Heart left ventricle (tissue), 16 donors: ENCODE measurements at regions of chr15 and their contacts with region 1.

Region 1: DNA sequence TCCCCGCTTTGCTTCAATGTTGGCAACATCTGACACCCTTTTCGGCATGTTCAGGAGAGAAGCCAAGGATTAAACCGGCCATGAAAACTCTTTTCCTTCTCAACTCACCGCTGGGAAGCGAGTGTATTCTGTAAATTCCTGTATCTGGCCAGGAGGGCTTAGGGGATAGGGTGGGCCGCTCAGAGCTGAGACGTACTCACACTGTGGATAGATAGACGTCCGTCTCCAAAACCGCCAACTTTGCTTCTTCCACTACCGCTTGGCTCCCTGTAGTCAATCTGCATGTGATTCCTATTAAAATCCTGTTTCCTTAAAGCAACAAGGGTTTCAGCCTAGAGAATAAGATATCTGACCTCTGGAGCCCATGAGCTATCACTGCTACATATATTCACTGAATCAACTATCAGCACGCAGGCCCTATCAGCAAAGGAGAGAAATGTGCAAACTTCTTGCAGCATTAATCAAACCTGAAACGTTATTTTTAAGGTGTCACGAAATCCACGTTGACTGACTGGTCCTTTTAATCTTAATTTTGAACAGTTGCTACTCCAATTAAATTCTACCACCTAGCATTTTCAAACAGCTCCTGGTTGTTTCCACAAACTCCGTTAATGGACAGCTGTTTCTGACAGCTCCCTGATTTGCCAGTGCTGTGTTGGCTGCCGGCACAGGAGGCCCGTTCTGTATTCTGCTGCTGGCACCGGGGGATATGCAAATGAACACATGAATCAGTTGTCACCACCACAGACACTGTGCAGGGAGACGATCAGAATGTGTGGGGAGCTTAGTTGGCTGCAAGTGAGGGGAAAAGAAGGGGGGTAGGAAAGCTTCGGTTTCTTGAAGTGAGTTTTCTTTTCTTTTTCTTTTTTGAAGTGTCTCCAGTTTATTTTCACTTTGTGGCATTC is 438.9 kb upstream of the ARRDC4 start:
- DNase-seq: peak; percentile 67 to 86 (median 70)
- ATAC-seq: peak; percentile 94 to 97 (median 96)
- H3K4me3 ChIP-seq: peak overlapping the region; percentile 21 to 56 (median 42)
- H3K27ac ChIP-seq: peak overlapping the region; percentile 59 to 90 (median 78)
- H3K4me1 ChIP-seq: peaks cover 0 to 4% (median 0%) of the 10 kb centered on the region in 12 donors
- H3K27me3 ChIP-seq: no peaks in the 10 kb centered on the region
- CTCF ChIP-seq: no peak
- POLR2A ChIP-seq: no peak

Region 2: DNA sequence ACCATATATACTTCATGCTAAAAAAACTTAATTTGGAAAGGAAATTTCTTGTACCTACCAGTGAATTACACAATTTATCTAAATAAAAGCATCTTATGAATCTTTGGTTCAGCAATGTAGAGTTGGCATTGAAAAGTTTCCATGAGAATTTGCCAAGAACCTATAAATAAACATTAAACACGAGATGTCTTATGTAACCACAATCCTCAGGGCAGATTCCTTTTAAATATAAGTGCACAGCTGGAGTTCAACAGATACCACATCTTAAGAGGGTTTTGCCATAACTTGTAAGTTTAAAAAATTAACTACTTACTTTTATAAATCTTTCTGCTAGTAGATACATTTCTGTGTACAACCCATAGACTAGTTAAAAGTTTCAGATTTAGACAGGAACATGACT is 60.4 kb before region 1 on chr15:
- intact Hi-C with region 1: loop called in 2 of 10 experiments (anchors 5 kb)
- DNase-seq: no peak
- ATAC-seq: peak in 3 of 4 donors; percentile 42 to 66 (median 53)
- H3K4me3 ChIP-seq: peak overlapping the region in 1 of 12 donors; percentile 3
- H3K27ac ChIP-seq: peak overlapping the region in 8 of 12 donors; percentile 10 to 72 (median 48)
- H3K4me1 ChIP-seq: peaks cover 0 to 14% (median 3%) of the 10 kb centered on the region in 12 donors
- H3K27me3 ChIP-seq: no peaks in the 10 kb centered on the region
- CTCF ChIP-seq: no peak
- POLR2A ChIP-seq: no peak

Region 3: GRCh38 chr15:97692301-97693015 is 170.8 kb after region 1 on chr15:
- intact Hi-C with region 1: loop called in 1 of 10 experiments (anchors 10 kb)
- DNase-seq: peak in 4 of 5 donors; percentile 40 to 69 (median 42)
- ATAC-seq: peak; percentile 94 to 99 (median 98)
- H3K4me3 ChIP-seq: peak overlapping the region in 1 of 12 donors; percentile 6
- H3K27ac ChIP-seq: peak overlapping the region in 11 of 12 donors; percentile 15 to 86 (median 68)
- H3K4me1 ChIP-seq: peaks cover 0 to 18% (median 0%) of the 10 kb centered on the region in 12 donors
- H3K27me3 ChIP-seq: no peaks in the 10 kb centered on the region
- CTCF ChIP-seq: no peak
- POLR2A ChIP-seq: no peak